A549 (cell line): ENCODE measurements at regions of chr10 and their contacts with region 1.

Region 1: DNA sequence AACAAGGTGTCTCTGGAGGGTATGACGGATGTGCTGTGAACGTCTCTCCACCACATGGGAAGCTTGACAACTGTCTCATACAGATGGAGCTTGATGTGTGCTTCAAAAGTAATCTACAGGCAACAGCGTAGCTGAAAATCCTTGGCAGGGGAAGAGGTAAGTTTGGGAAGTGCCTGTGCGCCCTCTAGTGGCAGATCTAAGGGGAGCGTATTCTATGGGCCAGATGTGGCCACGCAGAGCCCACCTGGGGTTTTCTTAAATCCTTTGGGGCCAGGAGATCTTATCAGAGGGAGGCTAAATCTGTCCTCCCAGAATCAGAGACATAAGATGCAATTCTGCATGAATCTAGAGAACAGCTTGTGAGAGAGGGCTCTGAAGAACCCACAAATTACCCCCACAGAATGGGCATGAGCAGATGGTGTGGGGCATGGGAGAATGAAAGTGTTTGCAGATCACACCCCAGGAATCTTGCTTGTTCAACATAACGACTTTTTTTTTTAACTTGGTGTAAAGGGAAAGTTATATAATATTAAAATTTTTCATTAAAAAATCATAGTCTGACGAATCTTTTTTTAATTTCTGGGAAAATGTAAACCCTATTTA is 91.2 kb upstream of the MPP7 start:
- DNase-seq: peak; percentile 31 to 73
- ATAC-seq: peak; percentile 98 to 99
- H3K4me3 ChIP-seq: no peak overlapping the region
- H3K27ac ChIP-seq: no peak overlapping the region
- H3K4me1 ChIP-seq: no peaks in the 10 kb centered on the region
- CTCF ChIP-seq: peak; percentile 90
- EP300 ChIP-seq: no peak
- POLR2A ChIP-seq: no peak
- RAD21 ChIP-seq: peak; percentile 69 to 76

Region 2: DNA sequence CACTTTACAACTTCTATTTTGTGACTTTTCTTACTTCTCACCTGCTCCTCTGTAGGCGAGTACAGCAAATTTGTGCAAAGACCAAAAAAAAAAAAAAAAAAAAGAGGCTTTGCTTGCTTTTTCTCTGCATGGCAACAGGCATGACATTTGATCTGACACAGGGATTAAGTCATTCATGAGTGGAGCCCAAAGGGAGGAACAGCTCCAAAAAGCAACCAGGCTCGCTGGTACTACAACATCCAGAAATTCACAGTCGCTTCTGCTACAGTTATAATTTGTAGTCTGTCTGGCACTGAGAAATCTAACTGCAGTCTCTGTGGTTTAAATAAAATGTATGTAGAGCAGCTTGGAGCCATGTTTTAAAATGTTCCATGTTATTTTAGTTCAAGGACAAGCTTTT is 680.1 kb before region 1 on chr10:
- CTCF ChIA-PET with region 1: no interaction called
- POLR2A ChIA-PET with region 1: no interaction called
- DNase-seq: no peak
- ATAC-seq: no peak
- H3K4me3 ChIP-seq: no peak overlapping the region
- H3K27ac ChIP-seq: no peak overlapping the region
- H3K4me1 ChIP-seq: no peaks in the 10 kb centered on the region
- CTCF ChIP-seq: no peak
- EP300 ChIP-seq: no peak
- POLR2A ChIP-seq: no peak
- RAD21 ChIP-seq: no peak

Region 3: DNA sequence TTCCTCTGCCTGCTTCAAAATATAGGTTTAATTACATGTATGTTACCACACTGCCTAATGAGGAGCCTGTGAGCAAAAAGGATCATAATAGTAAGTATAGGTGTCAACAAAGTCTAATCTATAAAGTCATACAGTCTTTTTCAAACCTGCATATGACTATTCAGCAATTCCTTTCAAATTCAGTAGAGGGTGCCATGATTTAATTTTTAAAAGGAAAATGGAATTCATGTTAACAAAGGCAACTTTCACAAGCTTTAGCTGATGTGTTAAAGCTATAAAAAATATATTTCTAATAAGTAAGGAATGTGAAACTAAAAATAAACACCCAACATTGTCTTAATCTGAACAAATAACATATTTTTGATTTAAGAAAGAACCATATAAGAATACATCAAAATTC is 143.3 kb before region 1 on chr10:
- CTCF ChIA-PET with region 1: interaction called, 31 read pairs
- POLR2A ChIA-PET with region 1: no interaction called
- DNase-seq: peak in 1 of 2 experiments; percentile 12
- ATAC-seq: peak in 1 of 2 experiments; percentile 25; a peak in 1 of 6 replicates
- H3K4me3 ChIP-seq: no peak overlapping the region
- H3K27ac ChIP-seq: no peak overlapping the region
- H3K4me1 ChIP-seq: no peaks in the 10 kb centered on the region
- CTCF ChIP-seq: peak; percentile 51
- EP300 ChIP-seq: no peak
- POLR2A ChIP-seq: no peak
- RAD21 ChIP-seq: peak; percentile 62 to 72

Region 4: GRCh38 chr10:28370107-28370835 is 23.8 kb before region 1 on chr10:
- CTCF ChIA-PET with region 1: interaction called, 13 read pairs
- POLR2A ChIA-PET with region 1: no interaction called
- DNase-seq: no peak
- ATAC-seq: no peak
- H3K4me3 ChIP-seq: no peak overlapping the region
- H3K27ac ChIP-seq: no peak overlapping the region
- H3K4me1 ChIP-seq: no peaks in the 10 kb centered on the region; the same call in 2 of the 3 replicates
- CTCF ChIP-seq: no peak
- EP300 ChIP-seq: no peak
- POLR2A ChIP-seq: no peak
- RAD21 ChIP-seq: no peak

Region 5: GRCh38 chr10:28408237-28408777 is 14.2 kb after region 1 on chr10:
- CTCF ChIA-PET with region 1: interaction called, 14 read pairs
- POLR2A ChIA-PET with region 1: no interaction called
- DNase-seq: no peak
- ATAC-seq: no peak
- H3K4me3 ChIP-seq: no peak overlapping the region
- H3K27ac ChIP-seq: no peak overlapping the region
- H3K4me1 ChIP-seq: 0 out of 3 replicates have a peak, but pooled peaks cover 5% of the 10 kb centered on the region
- CTCF ChIP-seq: no peak
- EP300 ChIP-seq: no peak
- POLR2A ChIP-seq: no peak
- RAD21 ChIP-seq: no peak

Region 6: DNA sequence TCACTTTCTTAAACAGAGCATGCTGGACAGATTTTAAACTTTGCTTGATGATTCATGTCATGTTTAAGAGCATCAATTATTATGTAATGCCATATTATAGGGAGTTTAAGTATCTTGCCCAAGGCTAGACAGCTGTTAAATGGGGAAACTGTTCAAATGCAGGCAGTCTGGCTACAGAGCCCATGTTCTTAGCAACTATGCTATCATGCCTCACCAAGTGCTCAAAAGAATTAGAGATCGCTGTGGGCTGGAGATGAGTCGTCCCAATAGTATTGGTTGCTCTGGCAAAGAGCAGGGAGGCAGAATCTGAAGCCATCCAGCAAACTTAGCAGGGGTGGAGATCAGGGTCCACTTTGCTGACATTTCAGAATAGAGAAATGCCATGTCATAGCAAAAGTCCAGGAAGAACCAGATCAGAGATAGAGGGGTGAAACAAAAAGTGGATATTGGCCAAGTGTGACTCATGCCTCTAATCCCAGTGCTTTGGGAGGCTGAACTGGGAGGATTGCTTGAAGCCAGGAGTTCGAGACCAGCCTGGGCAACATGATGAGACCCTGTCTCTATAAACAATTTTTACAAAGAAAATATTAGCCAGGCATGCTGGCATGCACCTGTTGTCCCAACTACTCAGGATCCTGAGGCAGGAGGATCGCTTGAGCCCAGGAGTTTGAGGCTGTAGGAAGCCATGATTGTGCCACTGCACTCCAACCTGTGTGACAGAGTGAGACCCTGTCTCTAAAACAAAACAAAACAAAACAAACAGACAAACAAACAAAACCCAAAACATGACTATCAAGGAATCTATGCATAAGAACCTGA is 341.1 kb after region 1 on chr10:
- CTCF ChIA-PET with region 1: no interaction called
- POLR2A ChIA-PET with region 1: no interaction called
- DNase-seq: peak; percentile 62 to 92
- ATAC-seq: peak; percentile 97
- H3K4me3 ChIP-seq: no peak overlapping the region
- H3K27ac ChIP-seq: peak overlapping the region; percentile 42 to 68; a peak in 5 of 6 replicates
- H3K4me1 ChIP-seq: peaks cover 14% of the 10 kb centered on the region; the same call in 2 of the 3 replicates
- CTCF ChIP-seq: no peak
- EP300 ChIP-seq: peak; percentile 8 to 16; a peak in 1 of 5 replicates
- POLR2A ChIP-seq: no peak
- RAD21 ChIP-seq: no peak